Activated CD8-positive, alpha-beta memory T cell treated with anti-CD3 and anti-CD28 coated beads, Interleukin-2, amount 10 ng/mL, durations not matched to agents 7 days and 5 days (primary cell): ENCODE measurements at regions of chr10 and their contacts with region 1.

Region 1: DNA sequence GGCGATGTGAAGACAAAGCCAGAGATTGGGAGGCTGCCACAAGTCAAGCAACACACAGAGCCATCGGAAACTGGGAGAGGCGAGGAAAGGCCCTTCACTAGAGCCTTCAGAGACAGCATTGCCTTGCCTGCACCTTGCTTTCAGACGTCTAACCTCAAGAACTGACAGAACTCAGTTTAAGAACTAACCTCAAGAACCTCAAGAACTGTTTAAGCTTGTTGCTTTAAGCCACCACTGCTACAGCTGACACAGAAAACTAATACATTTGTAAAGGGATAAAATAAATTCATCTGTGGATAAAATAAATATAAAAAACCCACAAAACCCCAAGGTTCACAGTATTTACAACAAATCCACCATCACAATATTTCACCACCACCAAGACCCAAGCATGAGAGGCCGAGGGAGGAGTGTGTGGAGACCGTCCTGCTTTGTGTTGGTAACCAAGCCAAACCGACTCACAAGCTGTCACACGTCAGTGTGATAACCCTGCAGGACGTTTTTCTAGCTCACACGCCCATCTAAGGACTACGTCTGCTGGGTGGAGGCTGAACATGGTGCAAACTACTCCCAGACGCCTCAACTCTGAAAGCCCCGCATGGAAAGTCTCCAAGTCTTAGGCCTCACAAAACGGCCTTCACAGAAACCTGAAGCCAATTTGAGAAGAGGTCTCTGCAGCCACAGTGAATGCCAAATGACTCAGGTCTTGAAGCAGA is 116.8 kb downstream of the ABLIM1 start:
- DNase-seq: peak; percentile 92
- ATAC-seq: peak; percentile 84
- H3K4me3 Mint-ChIP-seq: peak overlapping the region; percentile 40
- H3K27ac Mint-ChIP-seq: peak overlapping the region; percentile 100
- H3K4me1 Mint-ChIP-seq: peaks cover 82% of the 10 kb centered on the region
- H3K27me3 Mint-ChIP-seq: no peaks in the 10 kb centered on the region

Region 2: GRCh38 chr10:114526504-114527238 is 14.6 kb before region 1 on chr10:
- CTCF ChIA-PET with region 1: interaction called, 80 read pairs
- DNase-seq: peak; percentile 95
- ATAC-seq: peak; percentile 98
- H3K4me3 Mint-ChIP-seq: peak overlapping the region; percentile 87
- H3K27ac Mint-ChIP-seq: peak overlapping the region; percentile 96
- H3K4me1 Mint-ChIP-seq: peaks cover 56% of the 10 kb centered on the region
- H3K27me3 Mint-ChIP-seq: no peaks in the 10 kb centered on the region